ENCODE measurements at regions of chr15 and their contacts with region 1.

Region 1: DNA sequence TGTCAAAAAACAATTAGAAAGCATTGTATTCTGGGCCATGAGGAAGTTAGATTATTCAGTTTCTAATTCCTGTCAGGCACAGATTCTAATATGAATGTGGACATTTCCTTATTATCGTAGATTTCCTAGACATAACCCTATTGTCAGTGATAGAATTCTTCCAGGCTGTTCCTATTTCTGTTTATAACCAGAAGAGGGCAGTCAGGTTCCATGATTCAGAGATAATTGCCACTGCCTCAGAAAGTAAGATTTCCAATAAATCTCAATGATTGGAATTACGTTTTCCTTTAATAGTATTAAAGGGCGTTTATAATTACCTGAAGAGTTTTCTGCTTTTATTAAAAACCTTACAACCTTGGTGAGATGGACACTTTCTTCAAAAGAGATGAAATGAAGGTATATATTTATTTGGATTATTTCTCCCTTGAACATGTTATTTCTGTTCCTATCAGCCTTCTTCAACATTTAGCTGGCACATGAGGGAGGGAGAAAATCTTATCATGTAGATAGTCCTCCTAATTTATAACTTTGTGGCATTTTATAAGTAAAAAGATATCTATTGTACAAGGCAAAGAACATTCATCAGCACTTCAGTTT is 439.2 kb downstream of the MCTP2 start:
- DNase-seq: no peak
- H3K4me3 Mint-ChIP-seq: no peak overlapping the region
- H3K27ac Mint-ChIP-seq: no peak overlapping the region
- H3K4me1 Mint-ChIP-seq: no peaks in the 10 kb centered on the region
- H3K27me3 Mint-ChIP-seq: peaks cover 9% of the 10 kb centered on the region

Region 2: DNA sequence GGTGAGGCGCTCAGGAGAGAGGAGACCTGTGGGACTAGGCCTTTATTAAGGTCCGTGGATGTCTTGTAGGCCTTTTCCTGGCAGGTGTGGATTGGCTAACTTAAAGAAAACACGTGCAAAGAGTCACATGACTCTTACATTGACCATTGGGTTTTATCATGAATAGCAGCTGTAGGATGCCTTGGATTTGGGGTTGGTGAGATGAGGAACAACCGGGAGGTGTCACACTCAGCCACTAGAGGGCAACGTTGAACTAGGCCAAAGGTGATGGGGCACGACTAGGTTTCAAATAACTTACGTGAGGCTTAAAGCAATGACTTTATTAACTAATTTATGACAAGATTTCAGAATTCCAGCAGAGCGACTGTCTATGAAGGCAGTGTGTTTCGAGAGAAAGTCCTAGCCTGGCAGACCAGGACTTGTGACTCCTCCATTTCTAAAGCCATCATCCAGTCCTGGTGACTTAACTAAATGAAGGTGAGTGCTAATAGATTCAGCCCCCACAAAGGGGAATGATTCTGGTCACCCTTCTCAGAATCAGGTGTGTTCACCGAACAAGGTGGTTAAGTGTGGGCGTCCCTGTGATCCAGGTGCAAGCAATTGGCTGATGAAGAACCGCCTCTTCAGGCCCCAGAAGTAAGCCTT is 93.5 kb before region 1 on chr15:
- CTCF ChIA-PET with region 1: interaction called, 4 read pairs
- POLR2A ChIA-PET with region 1: no interaction called
- intact Hi-C with region 1: loop called (anchors 2 kb)
- DNase-seq: peak; percentile 55
- H3K4me3 Mint-ChIP-seq: no peak overlapping the region
- H3K27ac Mint-ChIP-seq: no peak overlapping the region
- H3K4me1 Mint-ChIP-seq: no peaks in the 10 kb centered on the region
- H3K27me3 Mint-ChIP-seq: peaks cover 42% of the 10 kb centered on the region

Measured in activated CD4-positive, alpha-beta memory T cell treated with anti-CD3 and anti-CD28 coated beads for 36 hours (primary cell).